ENCODE measurements at regions of chr15 and their contacts with region 1.

Region 1: DNA sequence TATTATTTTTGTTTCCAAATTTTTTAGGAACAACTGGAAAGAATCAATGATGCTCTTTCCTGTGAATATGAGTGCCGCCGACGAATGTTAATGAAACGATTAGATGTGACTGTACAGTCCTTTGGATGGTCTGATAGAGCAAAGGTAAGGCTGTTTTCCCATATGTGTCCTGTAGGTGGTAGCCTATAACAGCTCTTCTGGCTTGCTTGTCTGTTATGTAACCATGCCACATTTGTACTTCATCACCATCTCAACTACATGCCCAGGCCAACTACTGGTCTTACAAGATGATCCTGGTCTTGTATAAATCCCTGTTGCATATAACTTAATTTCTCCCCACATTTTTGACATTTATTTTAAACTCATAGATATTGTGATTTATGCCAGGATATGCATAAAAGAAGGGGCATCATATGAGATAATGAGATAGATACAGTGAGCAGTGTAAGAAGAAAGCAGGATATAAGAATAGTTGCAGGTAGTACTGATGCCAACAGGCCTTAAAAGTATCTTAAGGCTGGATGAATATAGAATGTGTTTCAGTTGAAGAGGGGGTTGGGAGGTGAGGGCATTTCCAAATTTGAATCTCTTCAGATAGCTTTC is 20.3 kb downstream of the FAM98B start:
- DNase-seq: peak; percentile 73
- ATAC-seq: peak; percentile 99
- H3K4me3 ChIP-seq: no peak overlapping the region
- H3K4me3 Mint-ChIP-seq: no peak overlapping the region
- H3K27ac ChIP-seq: no peak overlapping the region
- H3K27ac Mint-ChIP-seq: no peak overlapping the region
- H3K4me1 ChIP-seq: no peaks in the 10 kb centered on the region
- H3K4me1 Mint-ChIP-seq: peaks cover 2% of the 10 kb centered on the region
- H3K27me3 ChIP-seq: no peaks in the 10 kb centered on the region
- H3K27me3 Mint-ChIP-seq: no peaks in the 10 kb centered on the region
- CTCF ChIP-seq: peak; percentile 89

Region 2: GRCh38 chr15:38453971-38454695 is 20.1 kb before region 1 on chr15 and contains the start of gene FAM98B:
- CTCF ChIA-PET with region 1: interaction called, 10 read pairs
- POLR2A ChIA-PET with region 1: no interaction called
- intact Hi-C with region 1: loop called (anchors 1 kb)
- DNase-seq: peak; percentile 91
- ATAC-seq: peak; percentile 86
- H3K4me3 ChIP-seq: peak within 1 kb of the TSS; percentile 69 to 94 (median 86)
- H3K4me3 Mint-ChIP-seq: peak within 1 kb of the TSS; percentile 99
- H3K27ac ChIP-seq: peak within 1 kb of the TSS; percentile 87 to 89
- H3K27ac Mint-ChIP-seq: peak within 1 kb of the TSS; percentile 97
- H3K4me1 ChIP-seq: peaks cover 9% of the 10 kb centered on the region in 2 donors
- H3K4me1 Mint-ChIP-seq: peaks cover 27% of the 10 kb centered on the region
- H3K27me3 ChIP-seq: no peaks in the 10 kb centered on the region
- H3K27me3 Mint-ChIP-seq: peaks cover 10% of the 10 kb centered on the region
- CTCF ChIP-seq: peak; percentile 12
- total RNA-seq, gene FAM98B: 16.6 and 21.5 TPM in 2 replicates